GM12878 (cell line): ENCODE measurements at regions of chr4 and their contacts with region 1.

Region 1: GRCh38 chr4:151276787-151277562 is at the start of gene PRSS48:
- DNase-seq: no peak
- ATAC-seq: peak; percentile 93
- H3K4me3 ChIP-seq: no peak within 1 kb of the TSS
- H3K27ac ChIP-seq: no peak within 1 kb of the TSS
- H3K4me1 ChIP-seq: no peaks in the 10 kb centered on the region
- H3K27me3 ChIP-seq: no peaks in the 10 kb centered on the region; a peak in 1 of 4 replicates
- CTCF ChIP-seq: peak; percentile 61 to 77 (median 72)
- EP300 ChIP-seq: no peak
- POLR2A ChIP-seq: no peak
- RAD21 ChIP-seq: peak; percentile 60
- polyA plus RNA-seq, gene PRSS48: not detected

Region 2: GRCh38 chr4:151266497-151266896 is 10.5 kb before region 1 on chr4:
- CTCF ChIA-PET with region 1: interaction called, 12 read pairs
- POLR2A ChIA-PET with region 1: no interaction called
- RAD21 ChIA-PET with region 1: no interaction called
- SMC1A ChIA-PET with region 1: interaction called, 3 read pairs
- in situ Hi-C with region 1: no loop called
- intact Hi-C with region 1: no loop called
- DNase-seq: no peak
- ATAC-seq: no peak
- H3K4me3 ChIP-seq: no peak overlapping the region
- H3K27ac ChIP-seq: no peak overlapping the region
- H3K4me1 ChIP-seq: no peaks in the 10 kb centered on the region
- H3K27me3 ChIP-seq: no peaks in the 10 kb centered on the region; a peak in 2 of 4 replicates
- CTCF ChIP-seq: no peak
- EP300 ChIP-seq: no peak
- POLR2A ChIP-seq: no peak
- RAD21 ChIP-seq: no peak

Region 3: GRCh38 chr4:151517896-151518295 is 240.9 kb after region 1 on chr4:
- CTCF ChIA-PET with region 1: no interaction called
- POLR2A ChIA-PET with region 1: no interaction called
- RAD21 ChIA-PET with region 1: no interaction called
- SMC1A ChIA-PET with region 1: no interaction called
- in situ Hi-C with region 1: no loop called
- intact Hi-C with region 1: no loop called
- DNase-seq: no peak
- ATAC-seq: no peak
- H3K4me3 ChIP-seq: no peak overlapping the region
- H3K27ac ChIP-seq: no peak overlapping the region
- H3K4me1 ChIP-seq: no peaks in the 10 kb centered on the region
- H3K27me3 ChIP-seq: no peaks in the 10 kb centered on the region
- CTCF ChIP-seq: no peak
- EP300 ChIP-seq: no peak
- POLR2A ChIP-seq: no peak
- RAD21 ChIP-seq: no peak

Region 4: GRCh38 chr4:151604238-151604637 is 327.3 kb after region 1 on chr4:
- CTCF ChIA-PET with region 1: interaction called, 11 read pairs
- POLR2A ChIA-PET with region 1: interaction called, 5 read pairs
- RAD21 ChIA-PET with region 1: no interaction called
- SMC1A ChIA-PET with region 1: no interaction called
- in situ Hi-C with region 1: no loop called
- intact Hi-C with region 1: no loop called
- DNase-seq: no peak
- ATAC-seq: peak; percentile 67
- H3K4me3 ChIP-seq: no peak overlapping the region
- H3K27ac ChIP-seq: no peak overlapping the region
- H3K4me1 ChIP-seq: no peaks in the 10 kb centered on the region
- H3K27me3 ChIP-seq: peaks cover 0 to 1% of the 10 kb centered on the region in 2 experiments; a peak in 3 of 4 replicates
- CTCF ChIP-seq: peak; percentile 26 to 42 (median 34); a peak in 4 of 6 replicates
- EP300 ChIP-seq: no peak
- POLR2A ChIP-seq: no peak
- RAD21 ChIP-seq: peak; percentile 45; the same call in 1 of the 2 replicates

Region 5: GRCh38 chr4:151614561-151614960 is 337.6 kb after region 1 on chr4:
- CTCF ChIA-PET with region 1: no interaction called
- POLR2A ChIA-PET with region 1: no interaction called
- RAD21 ChIA-PET with region 1: no interaction called
- SMC1A ChIA-PET with region 1: no interaction called
- in situ Hi-C with region 1: no loop called
- intact Hi-C with region 1: loop called (anchors 10 kb)
- DNase-seq: no peak
- ATAC-seq: no peak
- H3K4me3 ChIP-seq: no peak overlapping the region
- H3K27ac ChIP-seq: no peak overlapping the region
- H3K4me1 ChIP-seq: no peaks in the 10 kb centered on the region
- H3K27me3 ChIP-seq: no peaks in the 10 kb centered on the region
- CTCF ChIP-seq: no peak
- EP300 ChIP-seq: no peak
- POLR2A ChIP-seq: no peak
- RAD21 ChIP-seq: no peak